PC-9 (cell line): ENCODE measurements at regions of chr2 and their contacts with region 1.

Region 1: GRCh38 chr2:231706731-231707624 is 1.3 kb upstream of the PTMA start:
- DNase-seq: peak; percentile 92 to 97
- H3K4me3 ChIP-seq: peak overlapping the region; percentile 68
- H3K27ac ChIP-seq: peak overlapping the region; percentile 99
- H3K4me1 ChIP-seq: peaks cover 21% of the 10 kb centered on the region
- H3K27me3 ChIP-seq: no peaks in the 10 kb centered on the region
- CTCF ChIP-seq: peak; percentile 83

Region 2: GRCh38 chr2:231463698-231464575 is 243.0 kb before region 1 on chr2 and contains the start of gene NCL:
- CTCF ChIA-PET with region 1: no interaction called
- POLR2A ChIA-PET with region 1: no interaction called
- intact Hi-C with region 1: loop called (anchors 10 kb)
- DNase-seq: peak; percentile 79 to 87
- H3K4me3 ChIP-seq: peak within 1 kb of the TSS; percentile 99
- H3K27ac ChIP-seq: peak within 1 kb of the TSS; percentile 99
- H3K4me1 ChIP-seq: peaks cover 24% of the 10 kb centered on the region
- H3K27me3 ChIP-seq: no peaks in the 10 kb centered on the region
- CTCF ChIP-seq: no peak
- total RNA-seq, gene NCL: 450 and 557 TPM in 2 replicates

Region 3: DNA sequence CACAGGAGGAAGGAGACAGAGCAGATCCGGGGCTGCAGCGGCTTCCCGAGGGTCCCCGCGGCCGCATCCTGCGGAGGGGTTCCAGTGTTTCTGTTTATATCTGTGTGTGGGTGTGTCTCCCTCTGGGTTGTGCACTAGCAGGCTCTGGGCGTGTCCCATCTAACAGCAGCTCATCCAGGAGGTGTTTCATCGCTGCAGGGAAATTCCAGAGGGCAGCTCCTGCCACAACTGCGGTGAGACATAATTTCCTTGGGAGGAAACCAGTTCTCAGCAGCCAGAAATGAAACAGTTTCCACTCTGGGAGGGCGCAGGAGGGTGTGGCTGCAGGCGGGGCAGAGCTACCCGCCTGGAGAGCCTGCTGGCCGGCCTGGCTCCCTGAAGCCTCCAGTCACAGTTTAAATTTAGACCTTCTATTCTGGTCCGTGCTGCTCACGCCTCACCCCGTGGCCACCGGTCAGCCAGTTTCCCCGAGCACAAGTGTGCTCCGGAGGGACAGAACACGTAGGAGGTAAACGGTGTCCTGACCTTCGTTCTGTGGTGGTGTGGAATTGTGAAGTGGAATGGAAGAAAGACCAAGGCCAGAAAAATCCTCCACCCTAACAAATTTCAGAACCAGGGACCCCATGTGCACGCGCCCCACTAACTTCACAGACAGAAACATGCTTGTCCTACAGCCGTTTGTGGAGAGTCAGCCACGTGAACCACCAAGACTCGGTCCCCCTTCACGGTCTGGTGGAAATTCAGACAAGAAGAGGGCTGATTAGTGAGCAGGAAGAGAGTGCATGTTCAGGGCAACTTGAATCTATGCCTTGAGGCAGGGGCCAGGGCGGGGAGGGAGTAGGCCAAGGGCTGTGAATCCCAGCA is 64.1 kb before region 1 on chr2:
- CTCF ChIA-PET with region 1: no interaction called
- POLR2A ChIA-PET with region 1: interaction called, 10 read pairs
- intact Hi-C with region 1: loop called (anchors 2 kb)
- DNase-seq: peak; percentile 95 to 98
- H3K4me3 ChIP-seq: peak overlapping the region; percentile 48; the same call in 1 of the 2 replicates
- H3K27ac ChIP-seq: peak overlapping the region; percentile 98
- H3K4me1 ChIP-seq: peaks cover 64% of the 10 kb centered on the region
- H3K27me3 ChIP-seq: no peaks in the 10 kb centered on the region
- CTCF ChIP-seq: no peak

Region 4: GRCh38 chr2:231648587-231649174 is 58.3 kb before region 1 on chr2:
- CTCF ChIA-PET with region 1: no interaction called
- POLR2A ChIA-PET with region 1: interaction called, 10 read pairs
- intact Hi-C with region 1: loop called (anchors 2 kb)
- DNase-seq: peak; percentile 70 to 89
- H3K4me3 ChIP-seq: no peak overlapping the region
- H3K27ac ChIP-seq: no peak overlapping the region
- H3K4me1 ChIP-seq: peaks cover 35% of the 10 kb centered on the region
- H3K27me3 ChIP-seq: no peaks in the 10 kb centered on the region
- CTCF ChIP-seq: peak; percentile 85

Region 5: GRCh38 chr2:231662028-231662810 is 44.8 kb before region 1 on chr2:
- CTCF ChIA-PET with region 1: interaction called, 10 read pairs
- POLR2A ChIA-PET with region 1: interaction called, 4 read pairs
- intact Hi-C with region 1: loop called (anchors 1 kb)
- DNase-seq: peak; percentile 88 to 98
- H3K4me3 ChIP-seq: peak overlapping the region; percentile 56
- H3K27ac ChIP-seq: peak overlapping the region; percentile 64
- H3K4me1 ChIP-seq: peaks cover 39% of the 10 kb centered on the region
- H3K27me3 ChIP-seq: no peaks in the 10 kb centered on the region
- CTCF ChIP-seq: no peak

Region 6: DNA sequence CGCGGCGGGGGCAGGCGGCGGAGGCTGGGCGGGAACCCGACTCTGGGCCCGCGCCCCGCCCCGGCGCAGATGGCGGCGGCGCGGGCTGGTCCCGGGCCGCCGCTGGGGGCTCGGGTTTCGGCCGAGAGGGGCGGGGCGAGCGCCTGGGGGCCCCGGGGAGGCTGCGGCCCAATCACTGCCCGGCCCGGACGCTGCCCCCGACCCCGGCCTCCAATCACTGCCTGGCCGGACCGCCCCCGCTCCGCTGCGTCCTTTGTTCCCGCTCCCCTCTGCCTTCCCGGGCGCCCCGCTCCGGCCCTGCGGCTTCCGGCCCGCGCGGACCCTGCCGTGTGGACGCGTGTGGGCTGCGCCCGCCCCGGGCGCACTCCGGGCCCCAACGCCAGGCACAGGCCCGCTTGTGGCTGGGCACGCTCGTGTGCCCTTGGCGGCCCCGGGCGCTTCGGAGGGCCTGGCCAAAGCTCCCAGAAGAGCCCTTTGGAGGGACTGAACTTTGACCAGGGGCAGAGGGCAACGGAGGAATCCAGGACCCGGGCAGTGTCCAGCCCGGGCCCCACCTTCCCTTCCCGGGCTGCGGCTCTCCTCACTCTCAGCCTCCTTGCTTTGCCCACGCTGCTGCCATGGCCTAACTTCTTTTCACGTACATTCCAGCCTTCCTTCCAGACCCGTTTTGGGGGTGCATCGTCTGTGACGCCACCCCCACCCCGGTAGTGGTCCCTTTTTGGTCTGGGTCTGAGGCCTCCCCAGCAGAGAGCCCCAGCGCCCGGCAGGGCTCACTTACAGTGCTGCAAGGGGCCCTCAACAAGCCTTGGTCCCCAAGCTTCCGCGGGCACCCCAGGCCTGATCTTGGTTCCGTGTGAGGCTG is 25.8 kb before region 1 on chr2:
- CTCF ChIA-PET with region 1: interaction called, 5 read pairs
- POLR2A ChIA-PET with region 1: no interaction called
- intact Hi-C with region 1: loop called (anchors 1 kb)
- DNase-seq: peak; percentile 61 to 93
- H3K4me3 ChIP-seq: peak overlapping the region; percentile 60
- H3K27ac ChIP-seq: peak overlapping the region; percentile 92
- H3K4me1 ChIP-seq: peaks cover 24% of the 10 kb centered on the region
- H3K27me3 ChIP-seq: no peaks in the 10 kb centered on the region
- CTCF ChIP-seq: no peak

Region 7: GRCh38 chr2:231696007-231696371 is 11.0 kb before region 1 on chr2:
- CTCF ChIA-PET with region 1: no interaction called
- POLR2A ChIA-PET with region 1: interaction called, 18 read pairs
- intact Hi-C with region 1: no loop called
- DNase-seq: no peak
- H3K4me3 ChIP-seq: no peak overlapping the region
- H3K27ac ChIP-seq: no peak overlapping the region
- H3K4me1 ChIP-seq: no peaks in the 10 kb centered on the region
- H3K27me3 ChIP-seq: no peaks in the 10 kb centered on the region
- CTCF ChIP-seq: no peak